Left cardiac atrium (tissue), 4 donors: ENCODE measurements at regions of chr9 and their contacts with region 1.

Region 1: GRCh38 chr9:92790542-92791527 is 26.2 kb upstream of the BICD2 start:
- DNase-seq: peak; percentile 80
- ATAC-seq: peak; percentile 94

Region 2: GRCh38 chr9:92716557-92716956 is 74.3 kb before region 1 on chr9:
- intact Hi-C with region 1: loop called in 1 of 2 experiments (anchors 2 kb)
- DNase-seq: peak; percentile 67
- ATAC-seq: peak; percentile 42 to 52

Region 3: GRCh38 chr9:92728831-92729734 is 61.8 kb before region 1 on chr9:
- intact Hi-C with region 1: loop called (anchors 2 to 5 kb)
- DNase-seq: no peak
- ATAC-seq: peak; percentile 28 to 69